GM10248 (cell line): ENCODE measurements at regions of chr18 and their contacts with region 1.

Region 1: DNA sequence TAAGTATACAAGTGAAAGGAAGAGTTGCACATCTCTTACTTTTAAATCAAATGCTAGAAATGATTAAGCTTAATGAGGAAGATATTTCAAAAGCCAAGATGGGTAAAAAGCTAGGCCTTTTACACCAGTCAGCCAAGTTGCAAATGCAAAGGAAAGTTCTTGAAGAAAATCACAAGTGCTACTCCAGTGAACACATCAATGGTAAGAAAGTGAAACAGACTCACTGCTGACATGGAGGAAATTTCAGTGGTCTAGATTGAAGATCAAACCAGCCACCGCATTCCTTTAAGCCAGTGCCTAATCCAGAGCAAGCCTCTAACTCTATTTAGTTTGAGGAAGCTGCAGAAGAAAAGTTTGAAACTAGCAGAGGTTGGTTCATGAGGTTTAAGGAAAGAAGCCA is 79.1 kb downstream of the RBBP8 start:
- DNase-seq: no peak
- CTCF ChIP-seq: no peak

Region 2: DNA sequence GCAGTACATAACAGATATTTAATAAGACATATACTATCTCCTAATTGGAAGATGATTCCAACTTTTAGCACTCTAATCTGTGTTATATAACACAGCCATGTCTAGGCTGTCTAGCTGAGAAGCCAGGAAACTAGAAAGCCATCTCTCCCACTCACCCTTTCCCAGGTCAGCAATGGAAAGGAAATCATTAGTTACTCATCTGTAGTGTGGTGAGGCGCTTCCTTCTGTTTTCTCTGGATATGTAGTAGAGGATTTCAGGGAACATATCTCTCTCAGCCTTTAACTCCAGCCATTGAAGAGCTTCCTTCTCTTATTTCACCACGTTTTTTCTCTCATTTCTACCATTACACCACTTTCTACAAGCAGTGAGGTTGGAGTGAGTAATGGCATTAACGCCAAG is 59.7 kb before region 1 on chr18:
- CTCF ChIA-PET with region 1: no interaction called
- POLR2A ChIA-PET with region 1: no interaction called
- DNase-seq: no peak
- CTCF ChIP-seq: no peak

Region 3: GRCh38 chr18:22999212-22999611 is 13.0 kb before region 1 on chr18:
- CTCF ChIA-PET with region 1: interaction called, 10 read pairs
- POLR2A ChIA-PET with region 1: no interaction called
- DNase-seq: no peak
- CTCF ChIP-seq: no peak

Region 4: DNA sequence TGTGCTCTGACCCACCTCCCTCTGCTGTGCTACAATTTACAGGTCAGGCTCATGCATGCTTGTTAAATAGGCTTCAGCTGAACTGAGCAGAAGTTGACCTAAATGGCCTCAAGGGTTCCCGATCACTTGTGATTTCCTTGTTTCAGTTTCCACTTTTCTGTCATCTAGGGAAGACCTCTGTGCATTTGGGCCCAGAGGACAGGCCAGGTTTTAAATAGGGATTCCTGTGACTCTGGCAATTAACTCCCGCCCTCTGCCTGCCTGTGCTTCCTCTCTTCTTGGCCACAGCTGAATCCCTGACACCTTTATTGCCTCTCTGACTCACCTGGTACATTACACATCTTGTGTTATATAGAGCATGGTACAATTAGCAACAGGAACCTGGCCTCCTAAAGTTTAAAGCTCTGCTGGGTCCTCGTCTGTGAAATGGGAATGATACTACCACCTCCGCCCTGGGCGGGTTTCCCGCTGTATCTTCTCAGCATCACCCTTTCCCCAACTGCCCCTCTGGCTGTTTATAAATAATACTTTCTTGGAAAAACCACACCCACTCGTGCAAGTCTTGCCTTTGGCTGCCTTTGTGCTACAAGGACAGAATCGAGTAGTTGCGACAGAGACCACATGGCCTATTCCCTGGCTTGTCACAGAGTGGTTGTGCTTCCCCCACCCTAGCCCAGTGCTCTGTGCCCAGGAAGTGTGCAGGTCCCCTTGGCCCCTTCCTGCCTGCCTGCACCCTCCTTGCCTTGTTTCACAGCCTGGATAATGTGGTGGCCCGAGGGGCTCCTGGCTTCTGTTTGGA is 131.0 kb after region 1 on chr18:
- CTCF ChIA-PET with region 1: no interaction called
- POLR2A ChIA-PET with region 1: no interaction called
- DNase-seq: no peak
- CTCF ChIP-seq: no peak